ENCODE measurements at regions of chr7 and their contacts with region 1.

Region 1: DNA sequence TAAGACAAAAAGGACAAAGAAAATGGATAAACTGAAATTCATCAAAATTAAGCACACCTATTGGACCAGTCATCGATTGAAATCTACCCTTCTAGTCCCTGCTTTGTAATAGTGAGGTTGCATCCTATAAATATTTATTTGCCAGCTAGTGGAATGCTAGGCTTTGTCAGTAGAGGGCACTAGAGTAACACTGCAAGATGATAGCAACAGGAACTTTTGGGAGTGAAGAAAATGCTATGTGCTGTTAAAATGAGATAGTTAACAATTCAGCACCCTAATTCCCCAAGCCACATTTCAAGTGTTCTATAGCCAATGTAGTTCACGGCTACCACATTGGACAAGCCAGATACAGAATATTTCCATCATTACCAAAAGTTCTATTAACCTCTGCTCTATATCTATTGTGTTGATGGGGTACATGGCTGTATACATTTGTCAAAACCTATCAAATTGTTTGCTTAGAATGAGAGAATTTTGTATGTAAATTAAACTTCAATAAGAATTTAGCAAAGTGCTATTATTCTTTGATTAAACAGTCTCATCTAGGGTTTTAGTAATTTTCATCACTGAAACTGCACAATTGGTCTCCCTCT is 69.8 kb downstream of the LSMEM1 start:
- DNase-seq: peak in 1 of 2 experiments; percentile 67
- H3K4me3 ChIP-seq: no peak overlapping the region
- H3K4me3 Mint-ChIP-seq: no peak overlapping the region
- H3K27ac Mint-ChIP-seq: no peak overlapping the region
- H3K4me1 ChIP-seq: no peaks in the 10 kb centered on the region
- H3K4me1 Mint-ChIP-seq: no peaks in the 10 kb centered on the region
- H3K27me3 ChIP-seq: no peaks in the 10 kb centered on the region
- H3K27me3 Mint-ChIP-seq: no peaks in the 10 kb centered on the region
- CTCF ChIP-seq: peak; percentile 82 to 89

Region 2: GRCh38 chr7:112665726-112666125 is 115.2 kb after region 1 on chr7:
- CTCF ChIA-PET with region 1: no interaction called
- POLR2A ChIA-PET with region 1: no interaction called
- intact Hi-C with region 1: loop called (anchors 1 kb)
- DNase-seq: peak; percentile 46 to 48
- H3K4me3 ChIP-seq: no peak overlapping the region
- H3K4me3 Mint-ChIP-seq: no peak overlapping the region
- H3K27ac Mint-ChIP-seq: no peak overlapping the region
- H3K4me1 ChIP-seq: no peaks in the 10 kb centered on the region; the same call in 1 of the 2 replicates
- H3K4me1 Mint-ChIP-seq: no peaks in the 10 kb centered on the region
- H3K27me3 ChIP-seq: no peaks in the 10 kb centered on the region
- H3K27me3 Mint-ChIP-seq: no peaks in the 10 kb centered on the region
- CTCF ChIP-seq: peak in 1 of 2 experiments; percentile 53

Region 3: DNA sequence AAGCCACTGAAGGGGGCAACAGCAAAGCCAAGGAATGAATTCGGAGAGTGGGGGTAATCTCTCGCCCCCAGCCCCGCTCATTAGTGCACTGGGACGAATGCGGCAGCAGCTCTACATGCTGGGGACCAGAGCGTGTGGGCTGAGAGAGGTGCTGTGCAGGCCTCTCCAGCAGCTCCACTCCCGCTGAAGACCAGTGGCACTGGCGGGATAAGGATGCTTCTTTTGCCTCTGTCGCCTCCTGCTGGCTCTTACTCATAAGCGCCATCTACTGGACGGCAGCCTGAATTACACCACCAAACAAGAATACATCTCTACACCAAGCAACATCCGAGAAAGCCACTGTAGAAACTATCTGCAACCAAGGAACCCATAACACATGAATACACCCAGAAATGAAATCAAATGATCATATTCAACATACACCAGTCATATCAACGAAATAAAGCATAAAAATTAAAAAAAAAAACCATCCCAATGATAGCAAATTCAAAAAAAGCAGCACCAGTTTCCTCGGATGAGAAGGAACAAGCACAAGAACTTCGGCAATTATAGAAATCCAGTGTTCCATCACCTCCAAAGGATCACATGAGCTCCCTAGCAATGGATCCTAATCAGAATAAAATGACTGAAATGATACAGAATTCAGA is 318.7 kb after region 1 on chr7:
- CTCF ChIA-PET with region 1: no interaction called
- POLR2A ChIA-PET with region 1: no interaction called
- intact Hi-C with region 1: loop called (anchors 1 kb)
- DNase-seq: peak; percentile 50 to 61
- H3K4me3 ChIP-seq: no peak overlapping the region
- H3K4me3 Mint-ChIP-seq: no peak overlapping the region
- H3K27ac Mint-ChIP-seq: no peak overlapping the region
- H3K4me1 ChIP-seq: no peaks in the 10 kb centered on the region
- H3K4me1 Mint-ChIP-seq: no peaks in the 10 kb centered on the region
- H3K27me3 ChIP-seq: no peaks in the 10 kb centered on the region
- H3K27me3 Mint-ChIP-seq: no peaks in the 10 kb centered on the region
- CTCF ChIP-seq: peak; percentile 64 to 90

Region 4: DNA sequence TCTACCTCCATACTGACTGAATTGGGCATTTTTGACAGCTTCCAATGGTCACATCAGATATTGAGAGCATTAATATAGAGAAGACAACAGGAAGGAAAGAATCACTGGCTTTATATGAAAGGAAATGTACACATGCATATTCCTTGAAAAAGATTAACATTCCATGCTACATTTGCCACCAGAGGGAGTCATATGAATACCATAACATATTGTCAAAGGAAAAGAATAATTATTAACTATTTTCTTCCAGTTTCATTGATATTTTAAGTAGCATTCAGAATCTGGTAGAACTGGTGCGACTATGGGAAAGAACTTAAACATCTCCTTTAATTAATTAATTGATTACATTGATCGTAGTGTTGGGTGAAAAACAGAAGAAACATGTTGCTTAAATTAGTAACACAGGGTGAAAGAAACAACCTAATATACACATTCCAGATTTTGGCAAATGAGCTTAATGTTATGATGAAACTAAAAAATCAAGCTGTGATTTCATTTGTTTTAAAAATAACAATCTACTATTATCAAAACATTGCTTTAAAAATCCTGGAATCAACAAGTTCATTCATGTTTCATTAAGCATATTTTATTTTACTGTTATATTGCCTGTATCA is 464.6 kb after region 1 on chr7:
- CTCF ChIA-PET with region 1: no interaction called
- POLR2A ChIA-PET with region 1: no interaction called
- intact Hi-C with region 1: loop called (anchors 10 kb)
- DNase-seq: peak in 1 of 2 experiments; percentile 26
- H3K4me3 ChIP-seq: no peak overlapping the region
- H3K4me3 Mint-ChIP-seq: no peak overlapping the region
- H3K27ac Mint-ChIP-seq: no peak overlapping the region
- H3K4me1 ChIP-seq: no peaks in the 10 kb centered on the region
- H3K4me1 Mint-ChIP-seq: no peaks in the 10 kb centered on the region
- H3K27me3 ChIP-seq: no peaks in the 10 kb centered on the region
- H3K27me3 Mint-ChIP-seq: peaks cover 3% of the 10 kb centered on the region
- CTCF ChIP-seq: peak; percentile 38 to 42

Region 5: DNA sequence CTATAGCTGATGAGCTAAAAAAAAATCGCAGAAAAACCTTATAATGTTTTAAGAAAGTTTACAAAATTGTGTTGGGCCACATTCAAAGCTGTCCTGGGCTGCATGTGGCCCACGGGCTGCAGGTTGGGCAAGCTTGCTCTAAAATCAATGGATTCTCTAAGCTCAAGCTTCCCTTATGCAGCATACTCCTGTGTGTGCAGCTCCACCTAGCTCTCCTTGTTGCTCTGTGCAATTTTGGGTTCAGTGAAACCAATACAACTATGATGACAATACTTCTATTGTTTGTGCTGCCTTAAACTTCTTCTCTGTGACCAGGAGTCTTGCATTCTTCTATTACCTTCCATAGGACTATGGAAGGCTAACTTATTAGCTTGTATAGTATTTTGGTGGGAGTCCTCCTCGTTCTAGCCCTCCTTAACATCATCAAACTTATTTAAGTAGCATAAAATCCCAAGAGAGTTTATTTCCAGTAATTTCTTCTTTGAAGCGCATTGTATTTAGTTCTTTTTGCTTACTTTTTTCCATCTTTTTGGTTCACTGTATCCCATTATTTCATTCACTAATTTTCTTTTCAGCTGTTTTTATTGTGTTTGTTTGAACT is 738.7 kb after region 1 on chr7:
- CTCF ChIA-PET with region 1: no interaction called
- POLR2A ChIA-PET with region 1: no interaction called
- intact Hi-C with region 1: loop called (anchors 1 kb)
- DNase-seq: peak; percentile 33 to 45
- H3K4me3 ChIP-seq: no peak overlapping the region
- H3K4me3 Mint-ChIP-seq: no peak overlapping the region
- H3K27ac Mint-ChIP-seq: no peak overlapping the region
- H3K4me1 ChIP-seq: no peaks in the 10 kb centered on the region
- H3K4me1 Mint-ChIP-seq: no peaks in the 10 kb centered on the region
- H3K27me3 ChIP-seq: no peaks in the 10 kb centered on the region
- H3K27me3 Mint-ChIP-seq: peaks cover 3% of the 10 kb centered on the region
- CTCF ChIP-seq: peak; percentile 31 to 66

Measured in Caco-2 (cell line).